BJ (cell line): ENCODE measurements at regions of chr4 and their contacts with region 1.

Region 1: GRCh38 chr4:71270901-71271300 is 67.9 kb upstream of the SLC4A4 start:
- DNase-seq: no peak
- H3K4me3 ChIP-seq: no peak overlapping the region
- H3K27me3 ChIP-seq: no peaks in the 10 kb centered on the region
- CTCF ChIP-seq: peak; percentile 37

Region 2: GRCh38 chr4:71045256-71045655 is 225.6 kb before region 1 on chr4:
- CTCF ChIA-PET with region 1: no interaction called
- POLR2A ChIA-PET with region 1: no interaction called
- DNase-seq: no peak
- H3K4me3 ChIP-seq: no peak overlapping the region
- H3K27me3 ChIP-seq: no peaks in the 10 kb centered on the region
- CTCF ChIP-seq: no peak

Region 3: DNA sequence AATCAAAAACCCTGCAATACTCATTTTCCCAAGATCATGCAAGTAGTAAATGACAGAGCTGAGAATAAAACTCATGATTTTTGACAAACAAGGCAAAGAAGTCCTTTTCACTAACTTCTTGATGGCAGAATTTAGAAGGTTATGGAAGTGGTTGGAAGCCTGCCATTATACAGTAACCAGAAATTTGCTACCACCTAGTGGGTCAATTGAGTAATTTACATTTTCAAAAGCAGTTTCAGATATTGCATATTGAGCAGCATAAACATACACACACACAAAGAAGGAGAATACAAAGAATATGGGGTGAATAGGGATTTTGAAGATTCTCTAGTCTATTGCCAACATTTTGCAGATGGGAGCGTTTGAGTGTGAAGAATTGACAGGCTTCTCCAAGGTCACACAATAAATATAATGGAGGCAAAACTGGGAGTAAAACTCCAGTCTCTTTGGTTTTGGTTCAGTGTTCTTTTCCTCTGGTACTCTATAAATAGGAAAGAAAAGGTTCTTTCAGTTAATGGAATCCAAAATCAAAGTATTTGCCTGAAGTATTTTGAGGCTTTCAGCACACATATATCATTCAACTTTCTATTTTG is 442.8 kb after region 1 on chr4:
- CTCF ChIA-PET with region 1: interaction called, 11 read pairs
- POLR2A ChIA-PET with region 1: no interaction called
- DNase-seq: no peak
- H3K4me3 ChIP-seq: no peak overlapping the region
- H3K27me3 ChIP-seq: no peaks in the 10 kb centered on the region
- CTCF ChIP-seq: peak; percentile 45